HEK293 (cell line): ENCODE measurements at regions of chr3 and their contacts with region 1.

Region 1: GRCh38 chr3:9792405-9793160 is at the starts of genes ARPC4 and TADA3:
- H3K4me3 ChIP-seq: peak within 1 kb of the TSS; percentile 83
- H3K27ac ChIP-seq: peak within 1 kb of the TSS; percentile 97
- H3K4me1 ChIP-seq: no peaks in the 10 kb centered on the region
- CTCF ChIP-seq: peak; percentile 28

Region 2: DNA sequence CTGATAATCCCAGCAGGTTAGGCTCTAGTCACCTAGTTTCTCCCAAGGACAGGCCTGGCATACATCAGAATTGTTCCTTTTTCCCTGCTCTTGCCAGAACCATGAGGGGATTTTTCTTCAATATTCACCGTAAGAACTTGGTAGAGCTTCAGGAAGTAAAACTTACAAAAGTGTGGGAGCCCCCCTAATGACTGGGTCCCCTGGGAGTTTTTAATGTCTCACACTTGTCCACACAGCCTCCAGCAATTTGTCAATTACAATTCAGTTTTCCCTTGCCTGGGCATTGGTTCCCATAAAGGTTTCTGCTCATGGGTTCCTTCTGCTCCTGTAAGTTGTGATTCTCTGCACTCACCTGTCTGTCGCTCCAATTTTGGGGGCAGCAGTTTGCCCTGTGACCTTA is 267.5 kb before region 1 on chr3:
- CTCF ChIA-PET with region 1: no interaction called
- POLR2A ChIA-PET with region 1: no interaction called
- H3K4me3 ChIP-seq: no peak overlapping the region
- H3K27ac ChIP-seq: no peak overlapping the region
- H3K4me1 ChIP-seq: no peaks in the 10 kb centered on the region
- CTCF ChIP-seq: no peak

Region 3: GRCh38 chr3:9769426-9770275 is 22.9 kb before region 1 on chr3 and contains the start of gene CAMK1:
- CTCF ChIA-PET with region 1: no interaction called
- POLR2A ChIA-PET with region 1: interaction called, 12 read pairs
- H3K4me3 ChIP-seq: peak within 1 kb of the TSS; percentile 67
- H3K27ac ChIP-seq: peak within 1 kb of the TSS; percentile 76; the same call in 1 of the 2 replicates
- H3K4me1 ChIP-seq: peaks cover 9% of the 10 kb centered on the region
- CTCF ChIP-seq: no peak

Region 4: GRCh38 chr3:9803494-9803893 is 10.9 kb after region 1 on chr3:
- CTCF ChIA-PET with region 1: interaction called, 7 read pairs
- POLR2A ChIA-PET with region 1: interaction called, 18 read pairs
- H3K4me3 ChIP-seq: no peak overlapping the region
- H3K27ac ChIP-seq: no peak overlapping the region
- H3K4me1 ChIP-seq: no peaks in the 10 kb centered on the region; the same call in 1 of the 2 replicates
- CTCF ChIP-seq: no peak

Region 5: GRCh38 chr3:9809615-9810432 is 17.2 kb after region 1 on chr3 and contains the start of gene TTLL3:
- CTCF ChIA-PET with region 1: interaction called, 7 read pairs
- POLR2A ChIA-PET with region 1: interaction called, 18 read pairs
- H3K4me3 ChIP-seq: peak within 1 kb of the TSS; percentile 34
- H3K27ac ChIP-seq: peak within 1 kb of the TSS; percentile 76
- H3K4me1 ChIP-seq: peaks cover 6% of the 10 kb centered on the region; the same call in 1 of the 2 replicates
- CTCF ChIP-seq: no peak